RWPE1 (cell line): ENCODE measurements at regions of chr2 and their contacts with region 1.

Region 1: GRCh38 chr2:25700221-25700660 is 26.9 kb upstream of the DTNB start:
- DNase-seq: peak; percentile 77
- H3K27ac ChIP-seq: no peak overlapping the region
- CTCF ChIP-seq: peak; percentile 93

Region 2: DNA sequence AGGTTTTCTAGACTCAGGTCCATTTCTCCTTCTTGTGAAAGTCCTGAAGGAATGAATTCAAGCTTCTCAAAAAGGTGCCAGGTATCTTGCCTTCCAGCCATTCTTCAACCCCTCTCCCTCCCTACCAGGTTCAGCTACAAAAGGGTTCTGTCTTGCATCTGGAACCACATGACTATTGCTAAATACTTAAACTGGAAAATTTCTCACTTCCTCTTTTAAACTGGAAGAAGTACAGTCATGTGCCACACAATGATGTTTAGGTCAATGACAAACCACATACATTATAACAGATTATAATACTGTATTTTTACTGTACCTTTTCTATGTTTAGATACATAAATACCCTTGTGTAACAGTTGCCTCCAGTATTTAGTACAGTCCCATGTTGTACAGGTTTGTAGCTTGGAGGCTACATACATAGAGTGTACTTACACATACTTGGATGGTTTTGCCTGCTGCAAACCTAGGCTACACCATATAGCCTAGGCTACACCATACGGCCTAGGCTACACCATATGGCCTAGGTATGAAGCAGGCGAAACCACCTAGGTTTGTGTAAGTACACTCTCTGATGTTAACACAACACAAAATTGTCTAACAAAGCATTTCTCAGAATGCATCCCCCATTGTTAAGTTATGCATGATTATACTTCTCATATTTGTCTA is 216.5 kb before region 1 on chr2:
- CTCF ChIA-PET with region 1: no interaction called
- POLR2A ChIA-PET with region 1: no interaction called
- DNase-seq: no peak
- H3K27ac ChIP-seq: no peak overlapping the region
- CTCF ChIP-seq: no peak

Region 3: DNA sequence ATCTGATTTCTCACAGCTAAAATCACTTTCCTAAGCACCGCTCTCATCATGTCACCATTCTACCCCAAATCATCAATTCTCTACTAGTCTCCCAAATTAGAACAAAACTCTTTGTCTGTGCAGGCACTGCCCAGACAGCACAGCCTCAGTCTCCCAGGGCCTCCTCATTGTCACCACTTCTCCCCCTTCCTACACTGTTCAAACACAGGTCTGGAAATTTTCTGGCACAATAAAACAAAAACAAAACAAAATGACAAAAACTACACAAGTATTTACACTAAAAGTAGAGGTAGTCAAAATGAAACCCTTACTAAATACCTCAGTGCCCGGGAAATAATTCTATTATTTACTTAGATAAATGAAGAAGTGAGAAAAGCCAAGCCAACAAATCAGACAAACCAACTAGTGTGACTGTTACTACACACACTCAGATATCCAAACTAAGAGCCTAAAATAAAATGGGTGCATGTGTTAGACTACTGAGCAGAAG is 202.3 kb before region 1 on chr2:
- CTCF ChIA-PET with region 1: no interaction called
- POLR2A ChIA-PET with region 1: no interaction called
- DNase-seq: no peak
- H3K27ac ChIP-seq: no peak overlapping the region
- CTCF ChIP-seq: no peak

Region 4: DNA sequence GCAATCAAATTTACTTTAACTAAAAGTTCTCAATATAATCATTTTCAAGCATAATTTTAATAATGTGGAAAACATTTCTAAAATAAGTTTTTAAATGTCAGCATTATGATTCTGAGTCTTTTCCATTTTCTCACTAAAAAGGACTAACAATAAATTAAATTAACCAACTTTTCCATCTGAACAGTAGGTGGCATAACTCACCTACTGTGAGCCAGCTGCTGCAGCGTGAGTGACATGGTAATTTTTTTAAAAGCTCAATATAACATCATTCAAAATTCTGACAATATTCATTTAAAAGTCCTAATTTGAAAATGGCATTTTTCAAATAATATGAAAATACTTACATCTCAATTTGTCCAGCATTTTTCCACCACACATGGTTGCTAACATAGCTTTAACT is 93.3 kb before region 1 on chr2:
- CTCF ChIA-PET with region 1: interaction called, 45 read pairs
- POLR2A ChIA-PET with region 1: no interaction called
- DNase-seq: peak; percentile 50
- H3K27ac ChIP-seq: no peak overlapping the region
- CTCF ChIP-seq: peak; percentile 74

Region 5: GRCh38 chr2:25673300-25674076 is 26.8 kb before region 1 on chr2 and contains the start of gene DTNB:
- CTCF ChIA-PET with region 1: interaction called, 11 read pairs
- POLR2A ChIA-PET with region 1: no interaction called
- DNase-seq: peak; percentile 91
- H3K27ac ChIP-seq: peak within 1 kb of the TSS; percentile 98
- CTCF ChIP-seq: no peak